ENCODE measurements at regions of chr2 and their contacts with region 1.

Region 1: DNA sequence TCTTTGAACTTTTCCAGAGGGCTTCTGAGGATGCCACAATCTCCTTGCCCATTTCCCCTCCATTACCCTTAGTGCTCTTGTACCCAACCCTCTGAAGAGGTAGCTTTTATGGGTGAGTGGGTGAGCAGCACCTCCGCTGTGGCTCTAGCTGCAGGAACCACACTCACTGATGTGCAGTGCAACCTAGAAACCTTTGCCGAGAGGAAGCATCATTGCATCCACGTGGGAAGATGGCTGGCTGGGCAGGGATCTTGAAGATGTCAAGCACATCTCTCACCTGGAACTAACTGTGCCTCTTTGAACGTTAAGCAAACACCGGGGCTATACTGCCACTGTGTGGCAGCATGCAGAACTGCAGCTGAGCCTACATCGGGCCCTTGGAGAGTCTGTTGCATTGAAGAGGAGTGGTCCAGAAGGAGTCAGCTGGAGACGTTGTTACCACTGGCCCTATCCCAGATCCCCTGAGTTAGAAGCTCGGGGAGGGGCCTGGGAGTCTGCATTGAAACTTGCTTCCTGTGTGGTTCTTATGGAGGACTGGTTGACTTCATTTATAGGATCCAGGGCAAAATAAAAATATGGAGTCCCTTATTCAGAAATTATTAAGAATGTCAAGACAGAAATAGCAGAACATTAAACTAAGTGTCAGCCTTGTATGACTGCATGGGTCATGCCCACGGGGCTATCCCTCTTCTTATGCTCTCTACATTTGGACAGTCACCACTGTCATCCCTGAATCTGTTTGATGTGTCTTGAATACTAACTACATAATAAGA is 28.7 kb downstream of the IGFBP5 start:
- DNase-seq: peak; percentile 76
- ATAC-seq: peak; percentile 74

Region 2: GRCh38 chr2:216516730-216517350 is 149.8 kb before region 1 on chr2:
- intact Hi-C with region 1: loop called (anchors 2 kb)
- DNase-seq: no peak
- ATAC-seq: peak; percentile 61